Activated CD4-positive, alpha-beta memory T cell treated with anti-CD3 and anti-CD28 coated beads for 36 hours (primary cell): ENCODE measurements at regions of chr1 and their contacts with region 1.

Region 1: GRCh38 chr1:234978397-234979295 is 150.0 kb downstream of the TOMM20 start:
- DNase-seq: peak; percentile 86
- H3K4me3 Mint-ChIP-seq: peak overlapping the region; percentile 90
- H3K27ac Mint-ChIP-seq: peak overlapping the region; percentile 97
- H3K4me1 Mint-ChIP-seq: peaks cover 80% of the 10 kb centered on the region
- H3K27me3 Mint-ChIP-seq: no peaks in the 10 kb centered on the region

Region 2: DNA sequence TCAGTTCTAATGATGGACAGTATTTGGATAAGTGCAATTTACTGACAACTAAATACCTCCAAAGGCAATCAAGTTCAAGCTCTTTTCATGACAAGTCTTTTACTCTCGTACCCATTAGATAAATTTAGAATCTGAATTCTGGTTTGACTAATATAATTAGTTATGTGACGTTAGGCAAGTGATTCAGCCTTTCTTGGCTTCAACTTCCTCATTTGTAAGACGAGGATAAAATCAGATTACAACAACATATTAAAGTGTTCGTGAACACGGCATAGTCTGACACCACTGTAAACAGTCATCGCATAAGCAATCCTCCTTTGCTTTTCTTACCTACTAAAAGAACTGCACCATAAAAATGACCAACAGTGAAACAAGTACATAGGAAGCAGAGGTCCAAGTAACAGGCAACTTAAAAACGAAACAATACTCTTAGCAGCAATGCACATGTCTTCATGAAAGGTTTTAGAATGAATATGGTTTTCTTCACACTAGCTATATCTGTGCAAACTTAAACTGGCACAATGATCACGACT is 579.7 kb before region 1 on chr1:
- CTCF ChIA-PET with region 1: no interaction called
- POLR2A ChIA-PET with region 1: no interaction called
- intact Hi-C with region 1: loop called (anchors 10 kb)
- DNase-seq: no peak
- H3K4me3 Mint-ChIP-seq: peak overlapping the region; percentile 66
- H3K27ac Mint-ChIP-seq: peak overlapping the region; percentile 92
- H3K4me1 Mint-ChIP-seq: peaks cover 53% of the 10 kb centered on the region
- H3K27me3 Mint-ChIP-seq: no peaks in the 10 kb centered on the region

Region 3: GRCh38 chr1:234836045-234836681 is 142.5 kb before region 1 on chr1:
- CTCF ChIA-PET with region 1: no interaction called
- POLR2A ChIA-PET with region 1: no interaction called
- intact Hi-C with region 1: no loop called
- DNase-seq: no peak
- H3K4me3 Mint-ChIP-seq: no peak overlapping the region
- H3K27ac Mint-ChIP-seq: no peak overlapping the region
- H3K4me1 Mint-ChIP-seq: peaks cover 25% of the 10 kb centered on the region
- H3K27me3 Mint-ChIP-seq: no peaks in the 10 kb centered on the region

Region 4: GRCh38 chr1:234933475-234933874 is 45.2 kb before region 1 on chr1:
- CTCF ChIA-PET with region 1: no interaction called
- POLR2A ChIA-PET with region 1: no interaction called
- intact Hi-C with region 1: loop called (anchors 1 kb)
- DNase-seq: peak; percentile 63
- H3K4me3 Mint-ChIP-seq: no peak overlapping the region
- H3K27ac Mint-ChIP-seq: peak overlapping the region; percentile 86
- H3K4me1 Mint-ChIP-seq: peaks cover 66% of the 10 kb centered on the region
- H3K27me3 Mint-ChIP-seq: no peaks in the 10 kb centered on the region

Region 5: GRCh38 chr1:234997201-234997895 is 18.7 kb after region 1 on chr1:
- CTCF ChIA-PET with region 1: no interaction called
- POLR2A ChIA-PET with region 1: no interaction called
- intact Hi-C with region 1: no loop called
- DNase-seq: no peak
- H3K4me3 Mint-ChIP-seq: no peak overlapping the region
- H3K27ac Mint-ChIP-seq: no peak overlapping the region
- H3K4me1 Mint-ChIP-seq: peaks cover 10% of the 10 kb centered on the region
- H3K27me3 Mint-ChIP-seq: no peaks in the 10 kb centered on the region

Region 6: GRCh38 chr1:235045034-235045720 is 66.5 kb after region 1 on chr1:
- CTCF ChIA-PET with region 1: interaction called, 3 read pairs
- POLR2A ChIA-PET with region 1: interaction called, 4 read pairs
- intact Hi-C with region 1: loop called (anchors 2 kb)
- DNase-seq: peak; percentile 70
- H3K4me3 Mint-ChIP-seq: no peak overlapping the region
- H3K27ac Mint-ChIP-seq: peak overlapping the region; percentile 91
- H3K4me1 Mint-ChIP-seq: peaks cover 59% of the 10 kb centered on the region
- H3K27me3 Mint-ChIP-seq: no peaks in the 10 kb centered on the region

Region 7: DNA sequence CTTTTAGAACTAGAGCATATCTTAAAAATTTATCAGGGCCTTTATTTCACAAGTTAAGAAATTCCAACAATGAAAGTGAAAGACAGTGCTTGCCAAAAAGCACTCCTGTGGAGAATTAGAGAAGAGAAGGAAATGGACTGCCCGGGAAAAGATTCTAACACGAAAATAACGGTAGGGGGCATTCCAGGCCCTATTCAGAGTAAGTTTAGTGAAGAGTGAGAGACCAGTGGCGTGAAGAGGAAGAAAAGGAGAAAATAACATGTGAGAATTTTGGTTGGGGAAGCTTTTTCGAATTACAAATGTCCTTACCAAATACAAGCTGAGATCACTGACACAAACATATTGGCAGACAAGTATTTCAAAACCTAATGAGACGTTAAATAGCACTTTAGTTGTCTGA is 220.8 kb after region 1 on chr1:
- CTCF ChIA-PET with region 1: no interaction called
- POLR2A ChIA-PET with region 1: no interaction called
- intact Hi-C with region 1: no loop called
- DNase-seq: no peak
- H3K4me3 Mint-ChIP-seq: no peak overlapping the region
- H3K27ac Mint-ChIP-seq: no peak overlapping the region
- H3K4me1 Mint-ChIP-seq: peaks cover 2% of the 10 kb centered on the region
- H3K27me3 Mint-ChIP-seq: no peaks in the 10 kb centered on the region

Region 8: DNA sequence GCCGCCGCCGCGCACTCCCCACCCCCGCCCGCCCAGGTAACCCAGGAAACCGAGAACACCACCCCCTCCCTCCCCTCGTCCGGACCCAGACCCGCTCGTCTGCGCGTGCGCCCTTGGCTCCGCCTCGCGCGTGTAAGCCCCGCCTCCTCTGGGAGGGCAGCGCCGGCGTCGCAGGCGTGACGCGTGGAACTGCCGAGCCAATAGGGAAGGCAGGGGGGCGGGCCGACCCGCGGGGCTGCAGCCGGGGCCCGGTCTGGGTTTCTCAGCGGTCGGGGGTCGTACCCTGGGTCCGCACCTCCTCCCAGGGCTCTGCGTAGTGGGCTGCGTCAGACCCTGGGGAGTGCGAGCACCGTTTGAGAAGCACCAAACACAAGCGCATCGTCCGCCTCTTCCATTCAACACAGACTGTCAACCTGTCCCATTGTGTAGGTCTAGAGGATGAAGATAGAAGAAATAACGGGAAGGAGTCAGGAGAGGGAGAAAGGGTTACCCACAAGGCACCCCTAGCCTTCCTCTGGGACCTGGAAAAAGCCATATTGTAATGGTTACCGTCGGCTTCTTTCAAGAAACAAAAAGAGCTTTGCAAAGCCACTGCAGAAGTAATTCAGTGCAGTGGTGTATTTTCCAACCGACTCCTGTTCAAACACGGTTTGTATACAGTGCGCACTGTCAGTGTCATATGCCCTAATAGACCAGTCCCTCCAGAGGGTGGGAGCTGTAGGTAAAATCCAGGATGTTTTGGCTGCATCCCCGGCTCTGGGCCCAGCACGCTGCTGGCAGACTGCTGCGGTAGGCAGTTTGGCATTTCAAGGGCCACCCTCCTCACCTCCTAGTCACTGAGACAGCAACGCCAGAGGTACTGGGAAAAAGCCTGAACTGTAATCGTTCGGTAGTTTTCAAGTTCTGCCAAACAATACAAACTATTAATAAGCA is 888.5 kb after region 1 on chr1:
- CTCF ChIA-PET with region 1: no interaction called
- POLR2A ChIA-PET with region 1: no interaction called
- intact Hi-C with region 1: loop called (anchors 5 kb)
- DNase-seq: peak; percentile 98
- H3K4me3 Mint-ChIP-seq: peak overlapping the region; percentile 89
- H3K27ac Mint-ChIP-seq: peak overlapping the region; percentile 98
- H3K4me1 Mint-ChIP-seq: peaks cover 45% of the 10 kb centered on the region
- H3K27me3 Mint-ChIP-seq: no peaks in the 10 kb centered on the region